PC-9 (cell line): ENCODE measurements at regions of chr5 and their contacts with region 1.

Region 1: DNA sequence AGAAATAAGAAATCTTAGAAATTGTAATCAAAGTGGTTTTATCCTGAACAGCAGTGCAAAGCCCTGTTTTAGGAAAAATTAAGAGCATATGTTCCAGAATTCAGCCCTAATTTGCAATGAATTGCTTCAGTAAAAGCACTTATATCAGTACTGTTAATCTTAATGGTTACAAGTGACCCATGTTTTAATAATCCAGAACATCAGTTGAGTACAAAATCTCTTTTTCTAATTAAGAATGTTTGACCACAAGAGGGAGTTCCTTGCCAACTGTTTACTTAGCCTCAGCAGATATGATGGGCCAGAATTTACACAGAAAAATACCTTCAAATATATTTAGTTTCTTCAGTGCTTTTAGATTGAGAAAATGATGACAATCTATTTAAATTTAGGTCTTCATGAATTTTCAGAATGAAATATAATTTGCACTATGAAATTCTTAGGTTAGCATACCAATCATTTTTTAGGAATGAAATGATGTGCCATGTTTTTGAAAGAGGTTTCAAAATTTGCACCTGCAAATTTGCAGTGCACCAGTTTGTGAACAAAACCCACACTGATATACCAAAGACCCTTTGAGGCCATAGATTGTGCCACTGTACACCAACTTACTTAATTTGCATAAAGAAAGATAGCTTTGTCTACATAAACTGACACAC is 926.3 kb upstream of the ARRDC3 start:
- DNase-seq: peak in 1 of 2 experiments; percentile 37
- H3K4me3 ChIP-seq: no peak overlapping the region
- H3K27ac ChIP-seq: no peak overlapping the region
- H3K4me1 ChIP-seq: no peaks in the 10 kb centered on the region
- H3K27me3 ChIP-seq: no peaks in the 10 kb centered on the region
- CTCF ChIP-seq: peak; percentile 79

Region 2: DNA sequence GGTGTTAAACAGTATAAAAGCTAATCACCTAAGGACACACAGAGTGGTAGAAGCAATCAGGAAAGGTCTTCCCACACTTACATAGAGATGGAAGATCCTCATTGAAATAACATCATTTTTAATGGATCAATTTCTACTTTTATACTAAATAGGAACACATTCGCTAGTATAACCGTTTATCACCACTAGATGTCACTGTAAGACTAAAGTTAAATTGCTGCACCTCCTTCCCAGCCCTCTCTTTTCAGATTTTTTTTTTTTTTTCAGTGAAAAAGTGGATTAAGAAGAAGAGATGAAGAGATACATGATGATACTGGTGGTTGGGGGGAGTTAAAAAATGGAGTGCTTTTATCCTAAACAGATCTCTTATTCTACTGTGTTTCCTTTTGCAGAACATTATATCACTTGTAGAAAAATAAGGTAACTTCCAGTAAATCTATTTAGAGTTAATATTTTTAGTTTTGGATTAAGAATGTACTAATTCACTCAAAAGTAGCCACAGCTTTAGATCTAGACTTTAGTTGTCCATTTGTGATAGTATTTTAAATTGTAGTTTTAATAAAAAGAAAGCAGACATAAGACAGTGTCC is 809.4 kb before region 1 on chr5:
- CTCF ChIA-PET with region 1: no interaction called
- POLR2A ChIA-PET with region 1: no interaction called
- intact Hi-C with region 1: loop called (anchors 5 kb)
- DNase-seq: peak in 1 of 2 experiments; percentile 41
- H3K4me3 ChIP-seq: no peak overlapping the region
- H3K27ac ChIP-seq: no peak overlapping the region
- H3K4me1 ChIP-seq: no peaks in the 10 kb centered on the region
- H3K27me3 ChIP-seq: no peaks in the 10 kb centered on the region
- CTCF ChIP-seq: peak; percentile 79

Region 3: DNA sequence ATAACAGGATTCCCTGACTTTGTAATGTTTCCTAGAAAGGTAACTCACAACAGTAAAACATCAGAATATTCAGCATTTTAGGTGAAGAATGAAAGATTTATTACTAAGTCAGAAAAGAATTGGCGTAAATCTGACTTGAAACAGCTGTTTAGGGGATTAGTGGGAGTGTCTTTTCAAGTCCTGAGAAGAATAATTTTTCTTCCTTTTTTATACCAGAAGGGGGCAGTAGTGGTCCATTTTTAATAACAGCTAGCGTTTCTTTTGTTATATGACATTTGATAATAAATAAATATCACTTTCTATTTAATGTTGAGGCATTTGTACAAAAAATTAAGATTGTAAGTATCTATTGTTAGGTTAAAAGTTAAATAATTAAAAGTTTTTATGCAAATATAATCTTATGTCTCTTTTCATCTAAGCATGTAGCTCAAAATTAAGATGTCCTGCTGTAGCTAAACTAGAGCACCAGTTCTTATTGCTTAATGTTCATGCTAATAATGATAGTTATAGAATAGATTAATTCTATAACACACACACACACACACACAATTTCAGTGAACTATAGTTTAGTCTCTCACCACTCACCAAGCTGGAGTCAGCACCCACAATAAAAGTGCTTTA is 667.6 kb before region 1 on chr5:
- CTCF ChIA-PET with region 1: no interaction called
- POLR2A ChIA-PET with region 1: no interaction called
- intact Hi-C with region 1: loop called (anchors 5 kb)
- DNase-seq: peak in 1 of 2 experiments; percentile 45
- H3K4me3 ChIP-seq: no peak overlapping the region; the same call in 1 of the 2 replicates
- H3K27ac ChIP-seq: no peak overlapping the region
- H3K4me1 ChIP-seq: no peaks in the 10 kb centered on the region
- H3K27me3 ChIP-seq: no peaks in the 10 kb centered on the region
- CTCF ChIP-seq: peak; percentile 87

Region 4: GRCh38 chr5:92147266-92147665 is 162.2 kb before region 1 on chr5:
- CTCF ChIA-PET with region 1: no interaction called
- POLR2A ChIA-PET with region 1: no interaction called
- intact Hi-C with region 1: no loop called
- DNase-seq: no peak
- H3K4me3 ChIP-seq: no peak overlapping the region
- H3K27ac ChIP-seq: no peak overlapping the region
- H3K4me1 ChIP-seq: no peaks in the 10 kb centered on the region
- H3K27me3 ChIP-seq: no peaks in the 10 kb centered on the region
- CTCF ChIP-seq: no peak

Region 5: GRCh38 chr5:92337772-92338234 is 28.3 kb after region 1 on chr5:
- CTCF ChIA-PET with region 1: no interaction called
- POLR2A ChIA-PET with region 1: no interaction called
- intact Hi-C with region 1: no loop called
- DNase-seq: peak in 1 of 2 experiments; percentile 36
- H3K4me3 ChIP-seq: no peak overlapping the region
- H3K27ac ChIP-seq: no peak overlapping the region
- H3K4me1 ChIP-seq: no peaks in the 10 kb centered on the region
- H3K27me3 ChIP-seq: no peaks in the 10 kb centered on the region
- CTCF ChIP-seq: no peak

Region 6: DNA sequence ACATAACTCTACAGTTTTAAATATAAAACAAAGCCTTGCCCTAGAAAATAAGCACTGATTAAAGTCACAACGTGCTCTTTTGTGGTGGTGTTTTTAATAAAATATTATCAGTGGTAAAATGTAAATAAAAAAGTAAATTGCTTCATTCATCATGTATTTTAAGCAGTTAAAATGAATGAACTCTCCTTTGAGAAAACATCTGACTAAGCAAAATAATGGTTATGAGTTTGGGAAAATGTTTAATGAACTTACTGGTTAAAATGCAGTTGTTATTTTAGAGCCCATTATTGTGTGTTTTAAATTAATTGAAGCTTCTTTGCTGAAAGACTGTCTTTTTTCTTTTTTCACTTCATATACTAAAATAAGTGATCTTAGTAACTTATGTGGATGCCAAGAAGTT is 81.2 kb after region 1 on chr5:
- CTCF ChIA-PET with region 1: no interaction called
- POLR2A ChIA-PET with region 1: no interaction called
- intact Hi-C with region 1: no loop called
- DNase-seq: no peak
- H3K4me3 ChIP-seq: no peak overlapping the region
- H3K27ac ChIP-seq: no peak overlapping the region
- H3K4me1 ChIP-seq: no peaks in the 10 kb centered on the region
- H3K27me3 ChIP-seq: no peaks in the 10 kb centered on the region
- CTCF ChIP-seq: no peak